Psoas muscle (tissue), 8 donors: ENCODE measurements at regions of chr2 and their contacts with region 1.

Region 1: GRCh38 chr2:32946314-32947075 is at the start of gene LTBP1:
- DNase-seq: peak; percentile 65 to 85
- ATAC-seq: peak; percentile 91 to 97 (median 92)
- H3K4me3 ChIP-seq: peak within 1 kb of the TSS; percentile 91
- H3K27ac ChIP-seq: peak within 1 kb of the TSS; percentile 82
- H3K4me1 ChIP-seq: peaks cover 12% of the 10 kb centered on the region
- H3K27me3 ChIP-seq: no peaks in the 10 kb centered on the region
- CTCF ChIP-seq: peak; percentile 81
- total RNA-seq, gene LTBP1: 9.5 to 26.8 (median 15.4) TPM

Region 2: GRCh38 chr2:32772638-32773447 is 173.7 kb before region 1 on chr2:
- intact Hi-C with region 1: loop called (anchors 1 to 5 kb)
- DNase-seq: no peak
- ATAC-seq: peak; percentile 61 to 80 (median 62)
- H3K4me3 ChIP-seq: no peak overlapping the region
- H3K27ac ChIP-seq: no peak overlapping the region
- H3K4me1 ChIP-seq: no peaks in the 10 kb centered on the region
- H3K27me3 ChIP-seq: no peaks in the 10 kb centered on the region
- CTCF ChIP-seq: peak; percentile 77

Region 3: GRCh38 chr2:32788114-32788513 is 158.4 kb before region 1 on chr2:
- intact Hi-C with region 1: loop called in 1 of 2 experiments (anchors 5 kb)
- DNase-seq: no peak
- ATAC-seq: peak in 1 of 4 donors; percentile 42
- H3K4me3 ChIP-seq: no peak overlapping the region
- H3K27ac ChIP-seq: no peak overlapping the region
- H3K4me1 ChIP-seq: peaks cover 27% of the 10 kb centered on the region
- H3K27me3 ChIP-seq: no peaks in the 10 kb centered on the region
- CTCF ChIP-seq: no peak

Region 4: GRCh38 chr2:32825291-32825712 is 121.2 kb before region 1 on chr2:
- intact Hi-C with region 1: loop called in 1 of 2 experiments (anchors 5 kb)
- DNase-seq: peak in 1 of 2 donors; percentile 44
- ATAC-seq: peak in 2 of 4 donors; percentile 28 to 63
- H3K4me3 ChIP-seq: peak overlapping the region; percentile 27
- H3K27ac ChIP-seq: peak overlapping the region; percentile 78
- H3K4me1 ChIP-seq: peaks cover 27% of the 10 kb centered on the region
- H3K27me3 ChIP-seq: no peaks in the 10 kb centered on the region
- CTCF ChIP-seq: no peak

Region 5: DNA sequence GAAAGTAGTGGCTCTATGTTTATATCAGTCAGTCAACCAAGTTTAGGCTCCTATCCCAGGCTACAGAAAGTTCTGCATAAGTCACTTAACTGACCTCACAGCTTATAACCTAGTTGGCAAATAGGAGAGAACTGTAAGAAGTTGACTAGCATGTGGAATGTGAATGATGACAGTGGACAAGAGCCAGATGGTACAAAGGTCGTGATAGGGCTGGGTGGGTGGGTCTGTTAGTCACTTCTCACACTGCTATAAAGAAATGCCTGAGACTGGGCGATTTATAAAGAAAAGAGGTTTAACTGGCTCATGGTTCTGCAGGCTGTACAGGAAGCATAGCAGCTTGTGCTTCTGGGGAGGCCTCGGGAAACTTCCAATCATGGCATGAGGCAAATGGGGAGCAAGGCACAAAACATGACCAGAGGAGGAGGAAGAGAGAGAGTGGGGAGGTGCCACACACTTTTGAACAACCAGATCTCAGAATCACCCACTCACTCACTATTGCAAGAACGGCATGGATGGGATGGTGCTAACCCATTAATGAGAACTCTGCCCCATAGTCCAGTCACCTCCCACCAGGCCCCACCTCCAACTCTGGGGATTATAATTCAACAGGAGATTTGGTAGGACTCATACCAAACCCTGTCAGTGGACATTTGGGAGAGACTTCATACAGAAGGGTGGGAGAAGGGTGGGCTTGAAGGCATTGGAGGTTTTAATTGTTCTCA is 69.1 kb after region 1 on chr2:
- intact Hi-C with region 1: loop called (anchors 5 kb)
- DNase-seq: no peak
- ATAC-seq: peak in 3 of 4 donors; percentile 56 to 86 (median 60)
- H3K4me3 ChIP-seq: no peak overlapping the region
- H3K27ac ChIP-seq: peak overlapping the region; percentile 47
- H3K4me1 ChIP-seq: peaks cover 13% of the 10 kb centered on the region
- H3K27me3 ChIP-seq: no peaks in the 10 kb centered on the region
- CTCF ChIP-seq: no peak

Region 6: GRCh38 chr2:33134086-33134771 is 187.7 kb after region 1 on chr2:
- intact Hi-C with region 1: loop called in 1 of 2 experiments (anchors 10 kb)
- DNase-seq: peak; percentile 65 to 75
- ATAC-seq: peak; percentile 86 to 88 (median 88)
- H3K4me3 ChIP-seq: peak overlapping the region; percentile 65
- H3K27ac ChIP-seq: peak overlapping the region; percentile 83
- H3K4me1 ChIP-seq: peaks cover 6% of the 10 kb centered on the region
- H3K27me3 ChIP-seq: no peaks in the 10 kb centered on the region
- CTCF ChIP-seq: peak; percentile 22

Region 7: GRCh38 chr2:33180915-33181314 is 234.4 kb after region 1 on chr2:
- intact Hi-C with region 1: no loop called
- DNase-seq: no peak
- ATAC-seq: no peak
- H3K4me3 ChIP-seq: no peak overlapping the region
- H3K27ac ChIP-seq: no peak overlapping the region
- H3K4me1 ChIP-seq: no peaks in the 10 kb centered on the region
- H3K27me3 ChIP-seq: no peaks in the 10 kb centered on the region
- CTCF ChIP-seq: no peak